Panc1 (cell line): ENCODE measurements at regions of chr11 and their contacts with region 1.

Region 1: GRCh38 chr11:74602637-74603556 is 10.5 kb downstream of the POLD3 start:
- DNase-seq: no peak
- ATAC-seq: no peak
- H3K4me3 ChIP-seq: no peak overlapping the region
- H3K27ac ChIP-seq: no peak overlapping the region
- H3K4me1 ChIP-seq: no peaks in the 10 kb centered on the region
- H3K27me3 ChIP-seq: no peaks in the 10 kb centered on the region
- CTCF ChIP-seq: no peak

Region 2: GRCh38 chr11:76103460-76103859 is 1500.6 kb after region 1 on chr11:
- CTCF ChIA-PET with region 1: no interaction called
- POLR2A ChIA-PET with region 1: interaction called, 10 read pairs
- in situ Hi-C with region 1: no loop called
- intact Hi-C with region 1: no loop called
- DNase-seq: no peak
- ATAC-seq: no peak
- H3K4me3 ChIP-seq: no peak overlapping the region
- H3K27ac ChIP-seq: no peak overlapping the region
- H3K4me1 ChIP-seq: no peaks in the 10 kb centered on the region
- H3K27me3 ChIP-seq: no peaks in the 10 kb centered on the region
- CTCF ChIP-seq: no peak